T-cell (primary cell): ENCODE measurements at regions of chr10 and their contacts with region 1.

Region 1: DNA sequence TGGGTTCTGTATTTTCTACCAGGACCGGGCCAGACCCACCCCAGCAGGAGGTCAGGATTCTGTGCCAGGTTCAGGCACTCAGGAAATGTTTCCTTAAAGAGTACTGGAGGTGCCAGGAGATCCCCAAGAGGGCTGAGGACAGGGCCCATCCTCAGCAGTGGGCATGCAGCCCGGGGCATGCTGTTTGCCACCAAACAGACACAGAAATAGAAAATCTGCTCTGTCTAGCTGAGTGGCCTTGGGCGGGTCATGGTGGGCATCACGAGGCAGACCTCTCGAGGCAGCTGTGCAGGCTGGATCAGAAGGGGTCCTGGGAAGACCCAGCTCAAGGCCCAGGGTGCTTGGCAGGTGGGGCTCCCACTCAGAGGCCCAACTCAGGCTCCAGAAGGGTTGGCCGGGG is 105.0 kb downstream of the FAM53B start:
- DNase-seq: no peak
- ATAC-seq: no peak
- H3K4me3 ChIP-seq: no peak overlapping the region
- H3K4me3 Mint-ChIP-seq: no peak overlapping the region
- H3K27ac ChIP-seq: peak overlapping the region; percentile 31
- H3K27ac Mint-ChIP-seq: peak overlapping the region; percentile 97 to 99
- H3K4me1 ChIP-seq: peaks cover 42 to 89% of the 10 kb centered on the region in 2 experiments
- H3K4me1 Mint-ChIP-seq: peaks cover 62 to 95% (median 80%) of the 10 kb centered on the region in 3 donors
- H3K27me3 ChIP-seq: no peaks in the 10 kb centered on the region
- H3K27me3 Mint-ChIP-seq: no peaks in the 10 kb centered on the region

Region 2: GRCh38 chr10:124587811-124588211 is 51.4 kb before region 1 on chr10:
- CTCF ChIA-PET with region 1: interaction called in 1 of 2 experiments, 11 read pairs
- POLR2A ChIA-PET with region 1: no interaction called
- DNase-seq: no peak
- ATAC-seq: no peak
- H3K4me3 ChIP-seq: no peak overlapping the region
- H3K4me3 Mint-ChIP-seq: no peak overlapping the region
- H3K27ac ChIP-seq: no peak overlapping the region
- H3K27ac Mint-ChIP-seq: no peak overlapping the region
- H3K4me1 ChIP-seq: no peaks in the 10 kb centered on the region
- H3K4me1 Mint-ChIP-seq: peaks cover 0 to 4% (median 0%) of the 10 kb centered on the region in 3 donors
- H3K27me3 ChIP-seq: peaks cover 0 to 2% of the 10 kb centered on the region in 2 experiments
- H3K27me3 Mint-ChIP-seq: no peaks in the 10 kb centered on the region